Right ventricle myocardium superior (tissue), 1 donor: ENCODE measurements at regions of chr16 and their contacts with region 1.

Region 1: GRCh38 chr16:527006-527753 is at the start of gene CAPN15:
- DNase-seq: peak; percentile 92
- ATAC-seq: peak; percentile 93
- total RNA-seq, gene CAPN15: 17.7 TPM

Region 2: DNA sequence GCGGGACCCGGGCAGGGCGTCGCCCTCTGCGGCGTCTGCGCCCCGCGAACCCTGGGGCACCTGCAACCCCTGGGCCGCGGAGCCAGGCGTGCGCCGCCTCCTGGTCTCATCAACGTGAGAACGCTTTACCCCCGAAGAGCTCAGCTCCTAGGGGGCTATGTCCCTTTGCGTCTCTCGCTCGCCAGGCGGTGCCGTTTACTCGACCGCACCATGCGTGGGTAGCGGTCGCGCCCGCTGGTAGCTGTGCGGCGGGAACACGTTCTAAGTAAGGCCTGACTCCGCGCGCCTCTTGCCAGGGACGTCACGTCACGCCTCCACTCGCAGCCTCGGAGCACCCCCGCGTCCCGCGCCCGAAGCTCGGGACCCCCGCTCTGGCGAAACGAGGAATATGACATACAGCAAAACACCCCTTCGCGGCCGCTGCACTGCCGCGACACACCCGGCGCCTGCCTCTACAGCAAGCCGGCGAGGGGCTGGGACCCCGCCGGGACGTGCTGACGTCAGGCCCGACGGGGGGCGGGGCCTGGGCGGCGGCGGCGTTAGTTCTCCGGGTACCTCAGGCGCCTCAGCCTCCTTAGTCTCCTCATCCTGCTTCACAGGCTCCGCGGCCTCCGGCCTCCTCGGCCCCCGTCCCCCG is 102.0 kb before region 1 on chr16 and contains the start of gene RAB11FIP3:
- intact Hi-C with region 1: loop called (anchors 10 kb)
- DNase-seq: peak; percentile 92
- ATAC-seq: peak; percentile 91
- total RNA-seq, gene RAB11FIP3: 25.4 TPM